Activated naive CD4-positive, alpha-beta T cell treated with anti-CD3 and anti-CD28 coated beads, Interleukin-2, amount 10 ng/mL, durations not matched to agents 7 days and 5 days (primary cell): ENCODE measurements at regions of chr19 and their contacts with region 1.

Region 1: DNA sequence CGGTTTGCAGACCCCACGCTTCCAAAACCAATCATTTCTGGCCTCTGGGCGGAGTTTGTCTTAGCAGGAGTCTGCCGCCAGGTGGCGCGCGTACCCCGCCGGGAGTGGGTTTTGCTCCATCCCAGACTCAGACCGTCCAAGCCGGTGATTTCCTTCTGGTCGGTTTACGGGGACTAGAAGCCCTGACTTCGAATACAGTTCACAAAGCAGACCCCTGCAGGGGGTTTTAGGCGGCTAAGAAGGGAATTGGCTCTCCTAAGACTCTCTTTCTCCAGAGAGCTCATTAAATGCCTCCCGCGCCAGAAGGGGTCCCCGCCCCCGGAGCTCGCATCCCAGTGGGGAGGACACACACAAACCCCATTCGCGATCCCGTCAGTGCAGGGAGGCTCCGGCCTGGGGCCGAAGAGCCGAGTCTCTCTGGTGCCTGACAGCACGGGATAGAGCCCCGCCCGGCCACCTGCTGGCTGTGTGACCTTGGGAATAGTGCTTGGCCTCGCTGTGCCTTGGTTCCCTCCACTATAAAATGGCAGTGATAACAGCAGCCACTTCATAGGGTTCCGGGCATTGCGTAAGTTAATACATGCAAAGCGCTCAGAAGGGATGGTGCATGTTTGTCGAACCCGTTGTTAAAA is 8.6 kb upstream of the NUP62 start:
- DNase-seq: peak; percentile 82
- H3K4me3 Mint-ChIP-seq: no peak overlapping the region
- H3K27ac Mint-ChIP-seq: no peak overlapping the region
- H3K4me1 Mint-ChIP-seq: peaks cover 27% of the 10 kb centered on the region
- H3K27me3 Mint-ChIP-seq: peaks cover 59% of the 10 kb centered on the region

Region 2: DNA sequence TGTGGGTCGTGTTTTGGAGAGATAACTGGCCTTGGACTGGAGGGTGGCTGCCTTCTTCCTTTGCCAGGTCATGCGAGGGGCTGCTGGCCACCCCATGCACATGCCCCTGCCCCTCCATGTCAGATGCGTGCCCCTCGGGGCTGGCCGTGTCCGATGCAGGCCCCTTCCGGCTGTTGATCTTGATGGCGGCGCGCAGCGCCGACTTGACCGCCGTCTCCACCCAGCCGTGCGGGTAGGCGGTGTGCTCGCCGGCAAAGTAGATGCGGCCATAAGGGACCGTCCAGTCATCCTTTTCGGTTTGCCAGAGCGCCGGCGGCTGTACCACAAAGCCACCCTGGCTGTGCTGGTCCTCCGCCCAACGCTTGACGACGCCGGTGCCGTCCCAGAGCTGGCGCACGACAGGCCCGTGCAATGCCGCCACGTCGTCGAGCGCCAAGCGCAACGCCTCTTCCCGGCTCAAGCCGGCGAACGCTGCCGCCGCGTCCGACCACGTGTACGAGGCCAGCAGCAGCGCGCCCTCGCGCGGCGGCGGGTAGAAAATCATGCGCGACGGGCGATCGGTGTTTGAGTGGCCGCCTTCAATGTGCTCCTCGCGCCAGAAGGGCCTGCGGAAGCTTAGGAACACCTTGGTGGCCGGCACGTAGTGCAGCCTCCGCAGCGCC is 48.0 kb before region 1 on chr19:
- CTCF ChIA-PET with region 1: no interaction called
- DNase-seq: peak; percentile 83
- H3K4me3 Mint-ChIP-seq: peak overlapping the region; percentile 66
- H3K27ac Mint-ChIP-seq: peak overlapping the region; percentile 45
- H3K4me1 Mint-ChIP-seq: peaks cover 14% of the 10 kb centered on the region
- H3K27me3 Mint-ChIP-seq: peaks cover 38% of the 10 kb centered on the region

Region 3: GRCh38 chr19:49954079-49954829 is 16.4 kb after region 1 on chr19:
- CTCF ChIA-PET with region 1: interaction called, 11 read pairs
- DNase-seq: no peak
- H3K4me3 Mint-ChIP-seq: no peak overlapping the region
- H3K27ac Mint-ChIP-seq: no peak overlapping the region
- H3K4me1 Mint-ChIP-seq: no peaks in the 10 kb centered on the region
- H3K27me3 Mint-ChIP-seq: peaks cover 34% of the 10 kb centered on the region

Region 4: GRCh38 chr19:49983645-49984229 is 45.9 kb after region 1 on chr19:
- CTCF ChIA-PET with region 1: interaction called, 31 read pairs
- DNase-seq: peak; percentile 86
- H3K4me3 Mint-ChIP-seq: no peak overlapping the region
- H3K27ac Mint-ChIP-seq: no peak overlapping the region
- H3K4me1 Mint-ChIP-seq: no peaks in the 10 kb centered on the region
- H3K27me3 Mint-ChIP-seq: no peaks in the 10 kb centered on the region